ENCODE measurements at regions of chr10 and their contacts with region 1.

Region 1: GRCh38 chr10:43461950-43462349 is 25.0 kb downstream of the ZNF487 start:
- DNase-seq: peak; percentile 48
- H3K4me3 Mint-ChIP-seq: no peak overlapping the region
- H3K27ac Mint-ChIP-seq: no peak overlapping the region
- H3K4me1 Mint-ChIP-seq: no peaks in the 10 kb centered on the region
- H3K27me3 Mint-ChIP-seq: no peaks in the 10 kb centered on the region
- CTCF ChIP-seq: peak; percentile 44

Region 2: DNA sequence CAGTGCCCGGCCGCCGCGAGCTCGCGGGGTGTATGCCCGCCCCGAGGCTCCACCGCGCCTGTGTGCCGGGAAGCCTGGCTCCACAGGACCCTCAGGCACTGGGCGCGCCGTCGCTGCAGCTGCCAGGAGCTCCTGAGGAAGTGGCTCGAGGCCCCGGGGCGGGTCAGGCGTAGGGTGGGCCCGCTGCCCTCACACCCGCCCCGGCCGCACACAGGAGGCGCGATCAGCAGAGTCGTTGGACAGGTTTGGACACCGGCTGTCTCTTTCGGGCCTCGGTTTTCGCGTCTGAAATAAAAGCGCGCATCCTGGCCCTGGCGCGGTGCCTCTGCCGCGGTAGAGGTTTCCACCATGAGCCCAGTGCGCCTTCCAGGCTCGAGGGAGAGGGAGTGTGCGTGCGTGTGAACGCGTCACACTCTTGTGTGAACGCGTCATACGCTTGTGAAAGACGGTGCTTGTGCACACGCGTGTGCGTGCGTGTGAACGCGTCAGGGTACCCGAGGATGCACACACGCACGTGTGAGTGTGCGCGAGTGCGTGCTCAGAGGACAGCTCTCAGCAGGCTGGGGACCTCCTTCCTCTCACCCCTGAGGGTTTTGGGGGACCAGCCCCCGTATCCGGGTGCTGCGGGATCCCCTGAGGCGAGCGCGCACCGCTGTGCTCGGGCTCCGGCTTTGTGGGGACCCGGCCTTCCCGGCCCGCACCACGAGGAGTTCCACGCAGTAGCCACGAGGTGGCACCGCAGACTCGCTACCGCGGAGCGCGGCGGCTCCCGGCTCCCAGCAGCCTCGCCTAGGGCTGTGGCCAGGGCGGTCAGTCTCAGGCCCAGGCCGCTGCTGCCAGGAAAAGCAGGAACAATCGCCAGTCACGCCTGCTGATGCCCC is 595.6 kb before region 1 on chr10:
- CTCF ChIA-PET with region 1: no interaction called
- intact Hi-C with region 1: loop called (anchors 2 kb)
- DNase-seq: peak; percentile 87
- H3K4me3 Mint-ChIP-seq: peak overlapping the region; percentile 35
- H3K27ac Mint-ChIP-seq: no peak overlapping the region
- H3K4me1 Mint-ChIP-seq: peaks cover 15% of the 10 kb centered on the region
- H3K27me3 Mint-ChIP-seq: peaks cover 78% of the 10 kb centered on the region
- CTCF ChIP-seq: peak; percentile 84

Region 3: DNA sequence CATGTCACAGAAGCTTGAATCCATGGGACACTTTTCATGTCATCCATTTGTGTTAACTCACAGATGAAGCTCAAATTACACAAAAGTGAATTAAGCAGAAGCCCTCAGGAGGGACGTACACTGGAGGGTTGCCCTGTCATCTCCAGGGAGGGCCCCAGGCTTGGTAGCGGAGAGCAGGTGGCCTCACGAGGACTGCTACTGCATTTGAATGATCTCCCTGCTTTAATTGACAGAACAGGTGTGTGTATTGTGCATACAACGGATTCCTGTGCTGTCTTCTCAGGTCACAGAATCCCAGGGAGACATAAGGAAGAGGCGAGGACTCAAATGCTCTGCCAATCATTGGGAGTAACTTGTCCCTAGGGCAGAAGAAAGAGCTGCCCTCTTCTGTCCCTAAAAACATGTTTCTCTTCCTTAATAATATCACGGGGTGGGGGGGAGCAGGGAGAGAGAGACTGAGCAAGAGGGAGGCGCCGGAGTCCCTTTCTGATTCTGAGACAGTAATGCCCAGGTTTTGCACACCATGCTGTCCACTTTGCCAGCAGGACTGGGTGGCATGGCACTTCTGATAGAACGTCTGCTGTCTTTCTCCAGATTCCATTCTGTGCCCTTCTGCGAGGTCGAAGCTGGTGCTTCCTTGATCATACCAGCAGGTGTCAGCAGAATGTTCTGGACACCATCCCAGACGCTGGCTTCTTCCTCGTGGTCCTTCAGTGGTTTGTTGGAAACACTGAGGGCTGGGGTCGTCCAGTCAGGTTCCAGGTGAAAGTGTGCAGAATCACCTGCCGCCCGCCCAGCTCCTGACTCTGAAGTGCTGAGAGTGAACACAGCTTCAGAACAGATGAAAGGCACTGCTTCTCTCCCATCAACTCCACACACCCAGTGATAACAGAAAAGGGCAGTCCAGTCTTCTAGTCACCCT is 168.9 kb before region 1 on chr10:
- CTCF ChIA-PET with region 1: no interaction called
- intact Hi-C with region 1: loop called (anchors 1 kb)
- DNase-seq: peak; percentile 61
- H3K4me3 Mint-ChIP-seq: no peak overlapping the region
- H3K27ac Mint-ChIP-seq: no peak overlapping the region
- H3K4me1 Mint-ChIP-seq: peaks cover 19% of the 10 kb centered on the region
- H3K27me3 Mint-ChIP-seq: no peaks in the 10 kb centered on the region
- CTCF ChIP-seq: peak; percentile 65

Region 4: DNA sequence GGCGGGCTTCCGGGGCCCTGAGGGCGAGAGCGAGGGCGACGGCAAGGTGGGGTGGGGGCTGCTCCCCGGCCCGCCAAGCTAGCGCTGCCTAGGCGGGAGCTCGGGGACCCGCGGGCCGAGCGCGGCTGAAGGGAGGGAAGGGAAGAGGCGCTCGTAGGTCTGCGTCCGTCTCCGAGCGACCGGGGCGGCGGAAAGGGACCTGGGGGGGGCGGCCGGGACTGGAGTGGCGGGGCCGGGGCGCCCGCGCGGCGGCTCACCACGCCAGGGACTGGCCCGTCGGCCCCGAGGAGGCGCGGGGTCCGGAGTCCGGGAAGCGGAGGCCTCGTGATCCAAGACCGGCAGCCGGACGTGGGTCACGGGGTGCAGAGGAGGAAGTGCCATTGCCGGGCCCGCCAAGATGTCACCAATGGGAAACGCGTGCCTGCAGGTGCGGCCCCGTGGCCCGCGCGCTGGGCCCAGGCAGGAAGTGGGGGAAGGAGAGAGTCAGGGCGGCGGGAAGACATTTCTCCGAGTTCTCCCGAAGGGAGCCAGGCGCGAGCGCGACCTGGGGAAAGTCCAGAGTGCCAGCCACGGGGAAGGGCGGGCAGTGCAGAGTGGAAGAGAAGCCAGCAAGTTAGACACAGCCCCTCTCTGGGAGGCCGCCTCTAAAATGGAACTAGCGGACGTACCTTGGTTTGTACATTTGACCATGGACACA is 64.9 kb before region 1 on chr10:
- CTCF ChIA-PET with region 1: no interaction called
- intact Hi-C with region 1: no loop called
- DNase-seq: peak; percentile 94
- H3K4me3 Mint-ChIP-seq: peak overlapping the region; percentile 85
- H3K27ac Mint-ChIP-seq: peak overlapping the region; percentile 81
- H3K4me1 Mint-ChIP-seq: peaks cover 55% of the 10 kb centered on the region
- H3K27me3 Mint-ChIP-seq: no peaks in the 10 kb centered on the region
- CTCF ChIP-seq: no peak